ENCODE measurements at regions of chr19 and their contacts with region 1.

Region 1: GRCh38 chr19:48780631-48781391 is 25.5 kb downstream of the FGF21 start:
- DNase-seq: peak in 1 of 2 donors; percentile 40
- H3K4me3 ChIP-seq: no peak overlapping the region
- CTCF ChIP-seq: no peak
- POLR2A ChIP-seq: no peak

Region 2: DNA sequence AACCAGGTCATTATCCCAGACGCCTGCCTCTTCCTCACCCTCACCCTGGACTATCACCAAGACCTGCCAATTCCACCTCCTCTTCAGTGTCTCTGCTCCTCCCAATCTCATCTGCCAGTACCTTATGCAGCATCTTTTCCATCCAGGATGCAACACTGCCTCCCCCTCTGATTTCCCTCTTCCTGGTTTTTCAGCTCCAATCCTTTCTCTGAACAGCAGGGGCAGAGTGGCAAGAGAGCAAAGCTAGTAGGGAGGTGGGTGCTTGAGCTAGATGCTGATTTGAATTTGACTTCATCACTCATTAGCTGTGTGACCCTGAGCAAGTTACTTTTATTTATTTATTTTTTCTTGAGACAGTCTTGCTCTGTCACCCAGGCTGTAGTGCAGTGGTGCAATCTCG is 711.4 kb before region 1 on chr19:
- intact Hi-C with region 1: no loop called
- DNase-seq: no peak
- H3K4me3 ChIP-seq: no peak overlapping the region
- CTCF ChIP-seq: no peak
- POLR2A ChIP-seq: no peak

Region 3: DNA sequence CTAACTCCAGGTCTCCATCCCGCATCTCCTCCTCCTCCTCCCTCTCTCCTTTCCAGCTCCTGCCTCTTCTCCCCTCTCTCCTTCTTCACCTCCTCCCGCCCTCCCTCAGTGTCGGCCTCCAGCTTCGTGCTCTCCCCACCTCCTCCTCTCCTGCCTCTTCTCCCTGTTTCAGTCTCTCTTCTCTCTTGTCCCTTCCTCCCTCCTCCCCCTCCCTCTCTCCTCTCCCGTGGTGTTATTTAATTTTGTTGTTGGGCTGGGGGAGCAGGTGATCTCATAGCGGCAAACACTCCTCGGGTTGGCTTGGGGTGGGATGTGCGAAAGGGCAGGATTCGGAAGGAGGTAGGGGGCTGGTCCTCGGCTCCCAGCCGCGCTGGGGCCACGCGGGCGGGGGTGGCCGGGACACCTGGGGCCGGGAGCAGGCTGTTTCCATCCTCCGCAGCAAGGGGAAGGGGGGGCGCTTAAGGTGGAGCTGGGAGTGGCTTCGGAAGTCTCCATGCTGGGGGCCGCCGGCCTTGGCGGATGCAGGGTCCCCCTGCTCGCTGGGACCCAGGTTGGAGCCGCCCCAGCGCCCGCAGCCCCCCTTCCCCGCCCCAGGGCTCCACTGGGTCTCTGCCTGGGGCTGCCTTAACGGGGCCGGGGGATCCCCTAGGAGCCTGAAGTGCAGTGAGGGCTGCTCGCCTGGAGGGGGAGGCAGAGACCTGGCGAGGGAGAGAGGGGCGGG is 134.7 kb before region 1 on chr19 and contains the start of gene CA11:
- intact Hi-C with region 1: loop called (anchors 10 kb)
- DNase-seq: peak in 1 of 2 donors; percentile 98
- H3K4me3 ChIP-seq: peak within 1 kb of the TSS; percentile 33
- CTCF ChIP-seq: peak in 1 of 3 donors; percentile 79
- POLR2A ChIP-seq: no peak
- total RNA-seq, gene CA11: 7.3 to 37.5 (median 10.3) TPM